ENCODE measurements at regions of chr7 and their contacts with region 1.

Region 1: GRCh38 chr7:55365675-55366460 is 731 bp downstream of the LANCL2 start:
- DNase-seq: peak; percentile 93
- ATAC-seq: peak; percentile 80
- H3K4me3 ChIP-seq: peak overlapping the region; percentile 98
- H3K27ac ChIP-seq: peak overlapping the region; percentile 92
- H3K4me1 ChIP-seq: peaks cover 17% of the 10 kb centered on the region; the same call in 1 of the 2 replicates
- H3K27me3 ChIP-seq: no peaks in the 10 kb centered on the region
- CTCF ChIP-seq: 0 out of 2 replicates have a peak, but pooled peaks have one; percentile 15

Region 2: DNA sequence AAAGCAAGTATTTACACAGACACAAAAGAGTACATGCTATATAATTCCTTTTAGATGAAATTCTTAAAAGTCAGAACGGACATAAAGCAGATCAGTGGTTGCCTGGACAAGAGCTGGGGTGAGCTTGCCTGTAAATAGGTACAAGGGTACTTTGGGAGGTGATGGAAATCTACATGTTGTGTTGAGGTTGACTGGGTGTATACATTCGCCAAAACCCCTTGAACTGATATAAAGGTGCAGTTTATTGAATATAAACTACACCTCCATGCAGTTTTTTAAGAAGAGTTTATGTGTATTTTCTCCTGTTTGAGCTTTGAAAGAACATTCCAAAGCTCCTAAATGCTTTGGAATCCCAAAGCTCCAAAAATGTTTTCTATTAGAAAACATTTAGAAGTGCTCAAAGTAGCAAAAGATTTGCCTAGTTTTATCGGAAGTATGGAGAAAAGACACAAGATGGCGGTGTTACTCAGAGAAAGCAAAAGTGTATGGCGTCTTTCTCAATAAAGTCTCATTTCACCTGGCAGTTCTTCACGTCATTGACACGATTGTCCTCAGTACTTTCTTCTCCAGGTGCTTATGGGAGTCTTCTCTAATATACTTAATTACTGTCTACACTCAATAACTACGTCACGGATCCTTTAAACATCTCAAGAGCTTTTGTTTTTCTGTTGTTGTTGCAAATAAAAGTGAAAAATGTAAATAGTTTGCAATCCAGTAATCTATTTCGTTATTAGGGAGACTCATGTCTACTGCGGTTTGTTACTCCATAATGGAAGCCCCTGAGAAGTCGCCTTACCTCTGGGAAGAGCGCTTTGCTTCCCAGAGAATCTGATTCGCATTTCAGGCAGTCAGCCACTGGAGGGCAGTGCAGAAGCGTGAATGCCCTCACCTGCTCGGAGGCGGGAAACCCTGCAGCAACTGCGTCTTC is 592.1 kb before region 1 on chr7:
- CTCF ChIA-PET with region 1: no interaction called
- POLR2A ChIA-PET with region 1: no interaction called
- intact Hi-C with region 1: loop called (anchors 5 kb)
- DNase-seq: peak; percentile 94
- ATAC-seq: peak; percentile 88
- H3K4me3 ChIP-seq: peak overlapping the region; percentile 67
- H3K27ac ChIP-seq: peak overlapping the region; percentile 54
- H3K4me1 ChIP-seq: peaks cover 21% of the 10 kb centered on the region
- H3K27me3 ChIP-seq: no peaks in the 10 kb centered on the region
- CTCF ChIP-seq: peak; percentile 86

Region 3: DNA sequence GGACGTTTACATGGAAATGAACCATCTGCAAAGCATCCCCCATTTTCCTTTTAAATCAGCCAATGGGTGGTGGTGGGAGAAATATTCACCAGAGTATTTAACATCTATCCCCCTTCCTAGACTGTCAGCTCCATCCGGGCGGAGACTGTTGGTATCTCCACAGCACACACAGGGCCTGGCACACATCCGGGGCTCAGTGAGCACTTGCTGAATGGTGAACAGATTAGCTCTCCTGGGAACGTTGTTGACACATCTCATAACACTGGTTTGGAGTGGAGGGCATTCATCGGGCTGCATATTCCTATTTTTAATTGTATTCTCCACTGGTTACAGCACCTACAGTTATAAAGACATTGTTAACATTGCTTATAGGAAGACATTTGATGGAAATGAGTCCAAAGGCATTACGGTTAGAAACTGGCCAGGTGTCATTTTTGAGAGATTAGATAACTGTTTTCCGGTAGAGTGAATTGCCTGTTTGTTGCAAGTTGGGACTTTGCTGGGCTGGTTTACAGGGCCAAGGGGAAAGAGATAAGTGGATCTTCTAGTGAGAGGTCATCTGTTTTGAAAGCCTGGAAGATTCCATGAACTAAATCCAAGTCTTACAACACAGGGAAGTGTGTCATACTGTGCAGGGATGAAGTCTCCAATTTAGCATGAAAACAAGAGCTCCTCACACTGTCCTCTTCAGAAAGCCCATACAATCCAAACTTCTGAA is 245.2 kb before region 1 on chr7:
- CTCF ChIA-PET with region 1: no interaction called
- POLR2A ChIA-PET with region 1: no interaction called
- intact Hi-C with region 1: no loop called
- DNase-seq: peak; percentile 24
- ATAC-seq: no peak
- H3K4me3 ChIP-seq: no peak overlapping the region
- H3K27ac ChIP-seq: 0 out of 2 replicates have a peak overlapping the region, but pooled peaks have one; percentile 9
- H3K4me1 ChIP-seq: peaks cover 25% of the 10 kb centered on the region
- H3K27me3 ChIP-seq: no peaks in the 10 kb centered on the region
- CTCF ChIP-seq: no peak

Region 4: GRCh38 chr7:55280031-55280454 is 85.8 kb before region 1 on chr7:
- CTCF ChIA-PET with region 1: no interaction called
- POLR2A ChIA-PET with region 1: no interaction called
- intact Hi-C with region 1: loop called (anchors 5 kb)
- DNase-seq: peak; percentile 83
- ATAC-seq: peak; percentile 94
- H3K4me3 ChIP-seq: no peak overlapping the region
- H3K27ac ChIP-seq: no peak overlapping the region
- H3K4me1 ChIP-seq: no peaks in the 10 kb centered on the region
- H3K27me3 ChIP-seq: no peaks in the 10 kb centered on the region
- CTCF ChIP-seq: peak; percentile 81

Region 5: DNA sequence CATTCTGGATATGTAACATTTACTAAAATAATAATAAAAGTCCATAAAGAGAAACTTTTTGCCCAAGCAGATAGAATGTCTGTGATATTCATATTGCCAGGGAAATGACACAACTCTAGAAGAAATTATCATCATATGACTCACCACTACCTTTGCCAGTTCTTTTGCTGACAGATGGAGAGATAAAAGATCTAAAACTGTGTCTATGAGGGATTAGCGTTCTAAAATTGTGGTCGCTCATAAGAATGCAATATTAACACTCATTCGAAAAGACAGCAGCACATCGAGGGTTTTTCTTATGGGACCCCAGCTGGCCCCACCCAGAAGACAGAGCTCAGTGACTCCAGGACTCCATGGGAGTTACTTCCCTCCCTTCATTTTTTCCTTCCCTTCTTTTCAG is 17.4 kb before region 1 on chr7:
- CTCF ChIA-PET with region 1: no interaction called
- POLR2A ChIA-PET with region 1: no interaction called
- intact Hi-C with region 1: loop called (anchors 2 kb)
- DNase-seq: peak; percentile 84
- ATAC-seq: peak; percentile 97
- H3K4me3 ChIP-seq: no peak overlapping the region
- H3K27ac ChIP-seq: no peak overlapping the region
- H3K4me1 ChIP-seq: peaks cover 8% of the 10 kb centered on the region; the same call in 1 of the 2 replicates
- H3K27me3 ChIP-seq: no peaks in the 10 kb centered on the region
- CTCF ChIP-seq: no peak

Region 6: GRCh38 chr7:55415173-55415778 is 49.4 kb after region 1 on chr7:
- CTCF ChIA-PET with region 1: interaction called, 4 read pairs
- POLR2A ChIA-PET with region 1: no interaction called
- intact Hi-C with region 1: loop called (anchors 5 kb)
- DNase-seq: peak; percentile 82
- ATAC-seq: peak; percentile 92
- H3K4me3 ChIP-seq: no peak overlapping the region
- H3K27ac ChIP-seq: no peak overlapping the region
- H3K4me1 ChIP-seq: peaks cover under 1% of the 10 kb centered on the region; the same call in 1 of the 2 replicates
- H3K27me3 ChIP-seq: no peaks in the 10 kb centered on the region
- CTCF ChIP-seq: peak; percentile 82

Region 7: GRCh38 chr7:55557666-55558188 is 191.9 kb after region 1 on chr7:
- CTCF ChIA-PET with region 1: no interaction called
- POLR2A ChIA-PET with region 1: no interaction called
- intact Hi-C with region 1: no loop called
- DNase-seq: no peak
- ATAC-seq: no peak
- H3K4me3 ChIP-seq: no peak overlapping the region
- H3K27ac ChIP-seq: no peak overlapping the region
- H3K4me1 ChIP-seq: peaks cover 53% of the 10 kb centered on the region
- H3K27me3 ChIP-seq: no peaks in the 10 kb centered on the region
- CTCF ChIP-seq: no peak

Measured in PC-3 (cell line).